Posterior vena cava (tissue), 2 donors: ENCODE measurements at regions of chr5 and their contacts with region 1.

Region 1: GRCh38 chr5:10069637-10070313 is 179.9 kb downstream of the ATPSCKMT start:
- DNase-seq: no peak

Region 2: GRCh38 chr5:10115669-10116068 is 45.9 kb after region 1 on chr5:
- intact Hi-C with region 1: loop called in 1 of 2 experiments (anchors 1 kb)
- DNase-seq: no peak